H1 (cell line): ENCODE measurements at regions of chr3 and their contacts with region 1.

Region 1: DNA sequence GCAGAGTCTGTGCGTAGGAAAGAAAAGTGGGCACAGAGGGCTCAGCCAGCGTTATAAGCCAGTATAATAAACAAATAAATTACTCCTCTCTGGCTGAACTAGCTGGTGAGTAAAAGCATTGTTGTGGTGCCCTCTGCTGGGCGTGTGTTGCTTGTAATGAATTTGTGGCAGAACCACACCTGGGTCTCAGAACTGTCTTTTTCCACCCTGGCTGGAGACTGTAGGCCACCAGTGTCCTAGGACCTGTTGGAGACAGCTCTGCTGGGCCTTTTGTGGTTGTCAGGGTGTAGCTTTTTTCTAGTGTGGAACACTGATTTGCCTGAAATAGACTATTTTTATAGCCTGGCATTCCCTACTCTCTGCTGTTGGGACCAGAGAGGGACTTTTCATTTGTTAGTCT is 130.5 kb upstream of the EIF1B start:
- DNase-seq: peak in 1 of 2 experiments; percentile 86
- H3K4me3 ChIP-seq: no peak overlapping the region
- H3K27ac ChIP-seq: no peak overlapping the region
- H3K4me1 ChIP-seq: 0 out of 7 replicates have a peak, but pooled peaks cover 0 to 2% (median 0%) of the 10 kb centered on the region in 4 experiments
- H3K27me3 ChIP-seq: no peaks in the 10 kb centered on the region; a peak in 1 of 7 replicates
- CTCF ChIP-seq: peak; percentile 50 to 78 (median 75)
- EP300 ChIP-seq: no peak
- POLR2A ChIP-seq: no peak
- RAD21 ChIP-seq: peak; percentile 80 to 83

Region 2: GRCh38 chr3:39724233-39724846 is 454.7 kb before region 1 on chr3:
- CTCF ChIA-PET with region 1: interaction called, 20 read pairs
- POLR2A ChIA-PET with region 1: no interaction called
- DNase-seq: no peak
- H3K4me3 ChIP-seq: no peak overlapping the region
- H3K27ac ChIP-seq: no peak overlapping the region
- H3K4me1 ChIP-seq: no peaks in the 10 kb centered on the region
- H3K27me3 ChIP-seq: no peaks in the 10 kb centered on the region
- CTCF ChIP-seq: peak in 2 of 3 experiments; percentile 39 to 43; a peak in 2 of 4 replicates
- EP300 ChIP-seq: no peak
- POLR2A ChIP-seq: no peak
- RAD21 ChIP-seq: peak; percentile 76 to 77

Region 3: DNA sequence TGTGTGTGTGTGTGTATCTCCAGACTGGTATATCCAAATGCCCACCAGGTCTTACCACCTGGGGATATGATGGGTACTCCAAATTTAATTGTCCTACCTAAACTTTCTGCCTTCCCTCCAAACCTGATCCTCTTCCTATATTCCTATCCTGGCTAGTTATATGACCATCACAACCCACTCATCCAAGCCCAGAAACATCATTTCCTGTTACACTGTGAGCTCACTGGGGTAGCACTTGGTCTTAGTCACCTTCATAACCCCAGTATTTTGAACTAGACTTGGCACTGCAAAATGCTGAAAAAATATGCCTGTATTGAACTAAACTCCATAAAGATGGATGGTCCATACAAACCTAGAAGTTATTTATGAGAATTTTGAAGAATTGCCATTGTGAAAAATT is 48.3 kb before region 1 on chr3:
- CTCF ChIA-PET with region 1: interaction called, 19 read pairs
- POLR2A ChIA-PET with region 1: no interaction called
- DNase-seq: no peak
- H3K4me3 ChIP-seq: no peak overlapping the region
- H3K27ac ChIP-seq: no peak overlapping the region
- H3K4me1 ChIP-seq: no peaks in the 10 kb centered on the region
- H3K27me3 ChIP-seq: no peaks in the 10 kb centered on the region
- CTCF ChIP-seq: no peak
- EP300 ChIP-seq: no peak
- POLR2A ChIP-seq: no peak
- RAD21 ChIP-seq: no peak

Region 4: GRCh38 chr3:40309418-40309924 is 130.5 kb after region 1 on chr3 and contains the start of gene EIF1B:
- CTCF ChIA-PET with region 1: interaction called, 63 read pairs
- POLR2A ChIA-PET with region 1: interaction called, 3 read pairs
- DNase-seq: peak; percentile 97 to 98
- H3K4me3 ChIP-seq: peak within 1 kb of the TSS; percentile 93 to 98 (median 96)
- H3K27ac ChIP-seq: peak within 1 kb of the TSS; percentile 94
- H3K4me1 ChIP-seq: peaks cover 3 to 5% (median 4%) of the 10 kb centered on the region in 4 experiments; a peak in 4 of 7 replicates
- H3K27me3 ChIP-seq: no peaks in the 10 kb centered on the region
- CTCF ChIP-seq: peak; percentile 69 to 95 (median 84)
- EP300 ChIP-seq: 0 out of 3 replicates have a peak, but pooled peaks of 1 of the 2 experiments have one; percentile 41
- POLR2A ChIP-seq: peak; percentile 74 to 97
- RAD21 ChIP-seq: peak; percentile 40 to 54
- total RNA-seq, gene EIF1B: 111 and 115 TPM in 2 replicates